ENCODE measurements at regions of chr4 and their contacts with region 1.

Region 1: GRCh38 chr4:41887821-41888686 is 47.2 kb upstream of the TMEM33 start:
- DNase-seq: peak in 1 of 2 experiments; percentile 42
- ATAC-seq: no peak
- H3K4me3 ChIP-seq: no peak overlapping the region
- H3K27ac ChIP-seq: no peak overlapping the region
- H3K4me1 ChIP-seq: no peaks in the 10 kb centered on the region
- CTCF ChIP-seq: peak; percentile 83
- EP300 ChIP-seq: no peak
- POLR2A ChIP-seq: no peak
- RAD21 ChIP-seq: peak; percentile 62 to 67

Region 2: DNA sequence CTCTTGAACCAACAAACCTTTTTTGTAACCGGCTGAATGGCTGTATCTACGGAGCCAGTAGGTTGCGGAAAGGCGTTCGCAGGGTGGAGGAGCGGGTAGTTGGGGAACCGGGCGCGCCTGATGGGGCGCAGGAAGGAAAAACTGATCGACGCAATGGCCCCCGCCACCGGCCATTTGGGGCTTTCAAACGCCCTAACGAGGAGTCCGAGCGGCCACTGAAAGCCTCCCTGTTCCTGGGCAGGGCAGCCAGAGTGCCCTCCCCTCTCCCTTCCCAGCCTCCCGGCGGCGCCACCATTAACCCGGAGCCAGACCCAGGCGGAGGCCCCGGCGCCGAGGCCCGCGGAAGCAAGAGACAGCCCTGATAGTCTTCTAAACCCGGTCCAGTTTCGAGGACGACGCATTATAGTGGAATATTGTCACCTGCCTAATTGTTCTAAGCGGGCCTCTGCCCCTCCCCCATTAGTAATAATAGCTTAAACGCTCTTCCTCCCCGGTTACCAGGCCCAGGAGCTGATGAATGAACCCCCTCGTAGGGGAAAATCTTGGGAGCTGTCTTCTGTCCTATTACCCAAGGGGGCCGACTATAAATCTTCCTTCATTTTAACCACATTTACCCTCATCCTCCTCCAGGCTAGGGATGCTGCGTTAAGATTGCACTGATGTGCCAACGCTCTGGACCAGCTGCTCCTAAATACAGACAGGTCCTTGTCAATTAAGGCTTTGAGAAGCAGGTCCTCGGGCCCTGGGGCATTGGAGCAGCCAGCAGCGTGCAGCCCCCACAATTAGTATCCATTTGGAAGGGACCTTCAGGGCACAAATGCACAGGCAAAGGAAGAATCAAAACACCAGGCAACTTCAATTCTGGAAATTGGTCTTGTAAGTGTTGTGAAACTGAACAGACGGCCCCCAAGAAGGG is 14.4 kb before region 1 on chr4:
- CTCF ChIA-PET with region 1: interaction called, 15 read pairs
- POLR2A ChIA-PET with region 1: no interaction called
- DNase-seq: no peak
- ATAC-seq: no peak
- H3K4me3 ChIP-seq: no peak overlapping the region
- H3K27ac ChIP-seq: no peak overlapping the region
- H3K4me1 ChIP-seq: no peaks in the 10 kb centered on the region
- CTCF ChIP-seq: no peak
- EP300 ChIP-seq: no peak
- POLR2A ChIP-seq: no peak
- RAD21 ChIP-seq: no peak